ENCODE measurements at regions of chr1 and their contacts with region 1.

Region 1: GRCh38 chr1:18965206-18966173 is 9.0 kb upstream of the IFFO2 start:
- DNase-seq: no peak
- H3K4me3 ChIP-seq: no peak overlapping the region
- H3K27ac ChIP-seq: no peak overlapping the region
- H3K4me1 ChIP-seq: peaks cover 10 to 36% (median 14%) of the 10 kb centered on the region in 3 donors
- H3K27me3 ChIP-seq: no peaks in the 10 kb centered on the region
- CTCF ChIP-seq: no peak
- POLR2A ChIP-seq: no peak

Region 2: GRCh38 chr1:18902523-18903290 is 62.8 kb before region 1 on chr1 and contains the start of gene ALDH4A1:
- intact Hi-C with region 1: loop called (anchors 5 kb)
- DNase-seq: peak; percentile 89
- H3K4me3 ChIP-seq: peak within 1 kb of the TSS; percentile 66 to 91 (median 78)
- H3K27ac ChIP-seq: peak within 1 kb of the TSS; percentile 93 to 97 (median 95)
- H3K4me1 ChIP-seq: peaks cover 4 to 63% (median 29%) of the 10 kb centered on the region in 3 donors
- H3K27me3 ChIP-seq: no peaks in the 10 kb centered on the region
- CTCF ChIP-seq: peak in 1 of 6 experiments; percentile 3
- POLR2A ChIP-seq: peak in 1 of 4 donors; percentile 24
- total RNA-seq, gene ALDH4A1: 36.7 to 59.1 (median 50.3) TPM

Region 3: GRCh38 chr1:19009882-19010321 is 44.4 kb after region 1 on chr1:
- intact Hi-C with region 1: loop called (anchors 5 kb)
- DNase-seq: no peak
- H3K4me3 ChIP-seq: no peak overlapping the region
- H3K27ac ChIP-seq: peak overlapping the region; percentile 85 to 94 (median 92)
- H3K4me1 ChIP-seq: peaks cover 23 to 63% (median 32%) of the 10 kb centered on the region in 3 donors
- H3K27me3 ChIP-seq: no peaks in the 10 kb centered on the region
- CTCF ChIP-seq: no peak
- POLR2A ChIP-seq: no peak

Measured in esophagus squamous epithelium (tissue), 5 donors.